ENCODE measurements at regions of chr6 and their contacts with region 1.

Region 1: DNA sequence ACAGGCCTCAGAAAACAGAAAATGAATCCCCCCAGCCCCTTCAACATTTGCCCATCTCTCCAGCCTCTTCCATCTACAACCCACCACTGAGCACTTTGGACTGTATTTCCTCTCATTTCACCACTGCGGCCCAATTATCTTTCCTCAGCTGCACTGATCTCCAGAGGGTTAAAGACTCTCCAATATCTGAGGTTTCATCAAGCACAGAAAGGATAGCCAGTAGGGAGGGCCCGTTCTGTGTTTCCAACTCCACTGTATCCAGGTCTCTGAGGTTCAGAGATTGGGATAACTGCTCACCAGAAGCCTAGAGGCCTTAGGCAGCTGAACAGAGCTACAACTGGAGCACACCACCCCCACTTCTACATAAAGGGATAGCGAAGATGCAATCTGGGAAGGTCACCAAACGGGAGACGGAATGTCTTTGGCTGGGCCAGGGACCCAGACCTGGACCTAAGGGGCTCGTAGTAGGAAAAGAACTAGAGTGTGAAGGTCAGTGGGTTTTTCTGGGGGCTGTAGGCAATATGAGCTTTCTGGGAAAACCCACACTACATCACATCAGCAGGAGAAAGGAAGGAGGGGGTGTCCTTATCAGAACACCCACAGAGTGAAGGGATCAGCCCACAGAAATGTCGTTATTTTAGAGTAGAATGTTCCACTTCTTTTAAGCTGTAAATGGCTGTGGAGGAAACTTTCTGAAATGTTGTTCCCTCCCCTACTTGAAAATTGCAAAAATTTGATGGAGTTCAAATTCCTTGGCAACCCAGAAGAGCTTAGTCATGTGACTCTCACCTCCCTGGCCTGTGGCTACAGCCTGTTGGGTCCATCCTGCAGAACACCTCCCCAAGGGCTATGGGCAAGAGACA is 7.3 kb downstream of the KCNK5 start:
- DNase-seq: no peak
- H3K4me3 Mint-ChIP-seq: peak overlapping the region; percentile 88
- H3K27ac Mint-ChIP-seq: peak overlapping the region; percentile 81
- H3K4me1 Mint-ChIP-seq: peaks cover 99% of the 10 kb centered on the region
- H3K27me3 Mint-ChIP-seq: no peaks in the 10 kb centered on the region

Region 2: DNA sequence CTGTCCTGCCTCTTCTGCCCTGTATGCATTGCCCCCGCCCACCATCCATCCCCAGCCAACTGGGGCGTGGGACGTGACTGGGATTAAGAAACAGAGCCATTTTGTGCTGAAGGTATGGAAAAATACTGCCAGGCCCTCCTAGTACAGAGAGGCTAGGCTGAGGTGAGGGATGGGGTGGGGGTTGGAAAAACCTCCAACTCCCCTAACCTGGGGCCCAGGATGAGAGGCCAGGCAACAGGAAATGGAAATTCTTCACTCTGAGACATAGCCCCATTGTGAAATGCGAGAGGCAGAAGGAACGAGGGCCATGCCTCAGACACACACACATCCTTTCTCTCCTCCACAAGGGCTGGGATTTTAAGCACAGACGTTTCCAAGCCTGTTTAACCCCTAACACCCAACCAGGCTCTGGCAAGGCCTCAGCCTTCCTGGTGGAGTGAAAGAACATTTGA is 12.6 kb before region 1 on chr6:
- intact Hi-C with region 1: loop called (anchors 2 kb)
- DNase-seq: no peak
- H3K4me3 Mint-ChIP-seq: peak overlapping the region; percentile 37
- H3K27ac Mint-ChIP-seq: peak overlapping the region; percentile 67
- H3K4me1 Mint-ChIP-seq: peaks cover 57% of the 10 kb centered on the region
- H3K27me3 Mint-ChIP-seq: no peaks in the 10 kb centered on the region

Region 3: DNA sequence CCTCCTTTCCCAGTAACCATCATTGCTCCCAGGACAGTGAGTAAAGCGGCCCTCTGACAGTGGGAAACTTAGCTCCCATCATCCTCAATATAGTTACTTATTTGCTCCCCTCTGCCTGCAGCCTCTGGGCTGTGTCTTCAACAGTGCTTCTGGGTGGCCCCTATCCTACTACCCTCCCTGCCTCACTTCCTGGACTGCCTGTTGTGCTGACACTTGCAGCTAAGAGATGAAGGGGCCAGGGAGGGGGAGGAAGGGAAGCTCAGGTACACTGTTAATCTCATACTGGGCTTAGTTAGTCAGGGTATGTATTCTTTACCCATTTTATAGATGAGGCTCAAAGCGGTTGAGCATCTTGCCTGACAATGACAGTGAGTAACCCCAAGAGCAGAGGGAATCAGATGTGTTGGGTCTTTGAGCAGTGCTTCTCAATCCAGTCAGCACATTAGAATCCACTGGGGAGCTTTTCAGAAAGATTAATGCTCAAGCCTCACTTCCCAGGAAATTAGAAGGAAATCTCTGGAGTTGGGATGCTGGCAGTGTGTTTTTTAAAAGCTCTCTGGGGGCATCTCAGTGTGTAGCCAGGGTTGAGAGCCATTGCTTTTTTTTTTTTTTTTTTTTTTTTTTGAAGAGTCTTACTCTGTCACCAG is 34.4 kb after region 1 on chr6:
- intact Hi-C with region 1: loop called (anchors 1 kb)
- DNase-seq: no peak
- H3K4me3 Mint-ChIP-seq: no peak overlapping the region
- H3K27ac Mint-ChIP-seq: peak overlapping the region; percentile 10
- H3K4me1 Mint-ChIP-seq: no peaks in the 10 kb centered on the region
- H3K27me3 Mint-ChIP-seq: peaks cover 15% of the 10 kb centered on the region

Measured in activated T-helper 1 cell treated with anti-CD3 and anti-CD28 coated beads, Interleukin-12 subunit alpha, Interleukin-12 subunit beta, Interleukin-2, Interleukin-4 antibody, amounts not matched to agents 30 ng/mL and 10 ng/mL and 1 ng/mL, durations not matched to agents 14 hours and 24 hours and 36 hours (primary cell).